ENCODE measurements at regions of chr3 and their contacts with region 1.

Region 1: GRCh38 chr3:112582244-112582874 is 20.5 kb downstream of the SLC35A5 start:
- DNase-seq: peak in 1 of 2 experiments; percentile 77
- ATAC-seq: peak; percentile 71 to 74; a peak in 4 of 6 replicates
- H3K4me3 ChIP-seq: no peak overlapping the region
- H3K27ac ChIP-seq: no peak overlapping the region
- H3K4me1 ChIP-seq: no peaks in the 10 kb centered on the region
- CTCF ChIP-seq: peak; percentile 83
- EP300 ChIP-seq: no peak
- POLR2A ChIP-seq: no peak
- RAD21 ChIP-seq: peak; percentile 87 to 90

Region 2: DNA sequence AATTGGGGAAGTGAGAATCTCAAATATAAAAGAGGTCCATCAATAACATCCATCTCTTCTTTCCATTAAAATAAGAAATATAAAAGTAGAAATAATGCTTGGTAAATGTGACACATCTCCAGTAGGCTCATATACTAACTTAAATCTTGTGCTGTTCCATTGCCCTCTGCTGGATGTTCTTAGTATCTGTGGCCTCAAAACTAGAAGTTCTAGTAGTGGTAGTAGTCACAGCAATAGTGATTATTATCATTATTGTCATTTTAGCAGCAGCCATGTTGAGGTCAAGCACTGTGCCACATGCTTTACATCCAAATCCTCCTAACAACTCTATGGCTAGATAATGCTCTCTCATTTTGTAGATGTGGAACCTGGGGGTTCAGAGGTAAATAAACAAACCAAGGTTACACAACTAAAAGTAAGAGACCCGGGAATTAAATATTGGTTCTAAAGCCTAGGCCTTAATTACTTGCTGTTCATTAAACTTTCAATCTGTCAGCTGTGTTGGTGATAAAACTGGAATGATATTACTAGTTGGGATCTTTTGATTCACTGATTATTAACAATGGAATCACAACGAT is 62.8 kb before region 1 on chr3:
- CTCF ChIA-PET with region 1: no interaction called
- POLR2A ChIA-PET with region 1: no interaction called
- DNase-seq: peak; percentile 50 to 73
- ATAC-seq: peak; percentile 87 to 97; a peak in 5 of 6 replicates
- H3K4me3 ChIP-seq: no peak overlapping the region
- H3K27ac ChIP-seq: no peak overlapping the region
- H3K4me1 ChIP-seq: no peaks in the 10 kb centered on the region
- CTCF ChIP-seq: peak; percentile 80
- EP300 ChIP-seq: no peak
- POLR2A ChIP-seq: no peak
- RAD21 ChIP-seq: peak; percentile 77 to 78

Region 3: DNA sequence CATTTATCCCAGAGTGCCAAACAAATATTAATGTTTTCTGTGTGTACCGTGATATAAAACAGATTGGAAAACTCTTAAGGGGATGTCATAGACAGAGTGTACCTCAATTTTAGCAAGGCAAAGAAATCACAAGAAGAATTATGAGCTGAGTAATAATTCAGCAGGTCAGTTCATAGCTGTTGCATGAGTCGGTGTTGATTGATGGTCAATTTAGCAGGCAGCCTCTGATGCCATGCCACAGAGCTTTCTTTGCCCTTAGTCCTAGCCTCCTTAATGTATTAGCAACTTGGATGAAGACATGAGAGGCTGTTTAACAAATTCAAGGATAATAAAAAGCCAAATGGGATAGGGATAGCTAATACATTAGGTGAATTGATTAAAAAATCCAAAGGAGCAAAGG is 13.7 kb before region 1 on chr3:
- CTCF ChIA-PET with region 1: interaction called, 41 read pairs
- POLR2A ChIA-PET with region 1: no interaction called
- DNase-seq: no peak
- ATAC-seq: no peak
- H3K4me3 ChIP-seq: no peak overlapping the region
- H3K27ac ChIP-seq: no peak overlapping the region
- H3K4me1 ChIP-seq: no peaks in the 10 kb centered on the region; the same call in 2 of the 3 replicates
- CTCF ChIP-seq: no peak
- EP300 ChIP-seq: no peak
- POLR2A ChIP-seq: no peak
- RAD21 ChIP-seq: no peak

Region 4: DNA sequence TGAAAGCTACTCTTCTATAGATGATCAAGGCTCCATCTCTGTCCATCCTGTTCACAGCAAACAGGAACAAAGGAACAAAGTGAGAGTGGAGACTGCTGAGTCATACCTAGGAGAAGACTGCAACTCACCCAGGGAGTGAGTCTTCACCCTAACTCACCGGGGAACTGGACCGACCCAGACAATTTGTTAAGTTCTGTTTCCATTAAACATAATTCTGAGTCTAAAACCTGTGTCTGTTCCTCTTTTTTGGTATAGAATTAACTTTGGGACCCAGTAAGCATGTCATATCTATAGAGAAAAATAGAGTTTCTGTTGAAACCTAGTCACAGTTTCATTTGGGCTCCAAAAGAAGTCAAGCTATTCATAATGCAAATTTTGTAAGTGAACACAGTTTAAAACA is 36.9 kb after region 1 on chr3:
- CTCF ChIA-PET with region 1: interaction called, 18 read pairs
- POLR2A ChIA-PET with region 1: no interaction called
- DNase-seq: peak in 1 of 2 experiments; percentile 37
- ATAC-seq: peak; percentile 39 to 55; a peak in 2 of 6 replicates
- H3K4me3 ChIP-seq: no peak overlapping the region
- H3K27ac ChIP-seq: peak overlapping the region; percentile 54 to 71
- H3K4me1 ChIP-seq: peaks cover 25% of the 10 kb centered on the region
- CTCF ChIP-seq: no peak
- EP300 ChIP-seq: no peak
- POLR2A ChIP-seq: no peak
- RAD21 ChIP-seq: no peak

Region 5: GRCh38 chr3:112629425-112629824 is 47.1 kb after region 1 on chr3:
- CTCF ChIA-PET with region 1: interaction called, 15 read pairs
- POLR2A ChIA-PET with region 1: no interaction called
- DNase-seq: peak; percentile 62 to 70
- ATAC-seq: peak; percentile 95 to 98
- H3K4me3 ChIP-seq: no peak overlapping the region
- H3K27ac ChIP-seq: peak overlapping the region; percentile 47 to 73
- H3K4me1 ChIP-seq: peaks cover 53% of the 10 kb centered on the region
- CTCF ChIP-seq: no peak
- EP300 ChIP-seq: no peak
- POLR2A ChIP-seq: no peak
- RAD21 ChIP-seq: no peak

Region 6: DNA sequence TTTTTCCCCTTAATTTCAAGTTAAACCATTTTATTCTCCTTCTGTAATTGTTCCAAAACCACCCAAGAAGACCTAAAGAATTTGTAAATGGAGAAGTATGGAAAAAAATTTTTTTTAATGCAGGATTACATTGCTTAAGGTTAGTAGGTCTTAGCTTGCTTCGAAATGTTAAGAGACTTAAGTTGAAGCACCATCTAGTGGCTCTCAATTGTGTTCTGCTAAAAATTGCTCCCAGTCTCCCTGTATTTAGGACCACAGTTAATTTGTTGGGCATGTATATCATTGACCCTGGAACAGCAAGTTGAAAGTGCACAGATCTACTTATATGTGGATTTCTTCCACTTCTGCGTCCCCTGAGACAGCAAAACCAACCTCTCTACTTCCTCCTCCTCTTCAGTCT is 231.9 kb after region 1 on chr3:
- CTCF ChIA-PET with region 1: interaction called, 23 read pairs
- POLR2A ChIA-PET with region 1: no interaction called
- DNase-seq: peak; percentile 33 to 82
- ATAC-seq: peak; percentile 82 to 93; a peak in 5 of 6 replicates
- H3K4me3 ChIP-seq: no peak overlapping the region
- H3K27ac ChIP-seq: peak overlapping the region; percentile 61 to 79
- H3K4me1 ChIP-seq: peaks cover 40% of the 10 kb centered on the region
- CTCF ChIP-seq: peak; percentile 83
- EP300 ChIP-seq: no peak
- POLR2A ChIP-seq: no peak
- RAD21 ChIP-seq: peak; percentile 90 to 96

Region 7: GRCh38 chr3:112979240-112979832 is 397.0 kb after region 1 on chr3:
- CTCF ChIA-PET with region 1: interaction called, 11 read pairs
- POLR2A ChIA-PET with region 1: no interaction called
- DNase-seq: peak; percentile 21 to 42
- ATAC-seq: no peak
- H3K4me3 ChIP-seq: no peak overlapping the region
- H3K27ac ChIP-seq: peak overlapping the region; percentile 2 to 25; a peak in 3 of 6 replicates
- H3K4me1 ChIP-seq: peaks cover 8% of the 10 kb centered on the region; the same call in 1 of the 3 replicates
- CTCF ChIP-seq: peak; percentile 83
- EP300 ChIP-seq: no peak
- POLR2A ChIP-seq: no peak
- RAD21 ChIP-seq: peak; percentile 74 to 83

Region 8: GRCh38 chr3:112984485-112984884 is 402.1 kb after region 1 on chr3:
- CTCF ChIA-PET with region 1: interaction called, 11 read pairs
- POLR2A ChIA-PET with region 1: no interaction called
- DNase-seq: no peak
- ATAC-seq: no peak
- H3K4me3 ChIP-seq: no peak overlapping the region
- H3K27ac ChIP-seq: no peak overlapping the region
- H3K4me1 ChIP-seq: peaks cover 11% of the 10 kb centered on the region
- CTCF ChIP-seq: no peak
- EP300 ChIP-seq: no peak
- POLR2A ChIP-seq: no peak
- RAD21 ChIP-seq: no peak

Measured in A549 (cell line).